ENCODE measurements at regions of chr7 and their contacts with region 1.

Region 1: DNA sequence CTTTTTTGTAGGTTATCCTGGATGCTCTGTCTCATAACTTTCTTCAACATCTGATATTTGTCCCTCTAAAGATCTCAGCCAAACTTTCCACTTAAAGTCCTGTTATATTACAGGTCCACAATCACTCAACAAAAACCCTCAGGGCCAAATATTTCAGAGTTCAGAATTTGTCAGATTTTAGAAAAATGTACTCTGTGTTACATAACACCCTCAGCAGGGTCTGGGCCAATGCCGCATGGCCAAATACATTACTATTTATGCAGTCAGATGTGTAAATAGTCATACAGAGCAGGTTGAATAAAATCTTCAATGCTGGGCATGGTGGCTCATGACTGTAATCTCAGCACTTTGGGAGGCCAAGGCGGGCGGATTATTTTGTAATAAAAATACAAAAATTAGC is 11.5 kb downstream of the RAB19 start:
- DNase-seq: no peak
- ATAC-seq: no peak
- H3K4me3 ChIP-seq: no peak overlapping the region
- H3K27ac ChIP-seq: no peak overlapping the region
- H3K4me1 ChIP-seq: no peaks in the 10 kb centered on the region
- H3K27me3 ChIP-seq: no peaks in the 10 kb centered on the region
- CTCF ChIP-seq: no peak

Region 2: DNA sequence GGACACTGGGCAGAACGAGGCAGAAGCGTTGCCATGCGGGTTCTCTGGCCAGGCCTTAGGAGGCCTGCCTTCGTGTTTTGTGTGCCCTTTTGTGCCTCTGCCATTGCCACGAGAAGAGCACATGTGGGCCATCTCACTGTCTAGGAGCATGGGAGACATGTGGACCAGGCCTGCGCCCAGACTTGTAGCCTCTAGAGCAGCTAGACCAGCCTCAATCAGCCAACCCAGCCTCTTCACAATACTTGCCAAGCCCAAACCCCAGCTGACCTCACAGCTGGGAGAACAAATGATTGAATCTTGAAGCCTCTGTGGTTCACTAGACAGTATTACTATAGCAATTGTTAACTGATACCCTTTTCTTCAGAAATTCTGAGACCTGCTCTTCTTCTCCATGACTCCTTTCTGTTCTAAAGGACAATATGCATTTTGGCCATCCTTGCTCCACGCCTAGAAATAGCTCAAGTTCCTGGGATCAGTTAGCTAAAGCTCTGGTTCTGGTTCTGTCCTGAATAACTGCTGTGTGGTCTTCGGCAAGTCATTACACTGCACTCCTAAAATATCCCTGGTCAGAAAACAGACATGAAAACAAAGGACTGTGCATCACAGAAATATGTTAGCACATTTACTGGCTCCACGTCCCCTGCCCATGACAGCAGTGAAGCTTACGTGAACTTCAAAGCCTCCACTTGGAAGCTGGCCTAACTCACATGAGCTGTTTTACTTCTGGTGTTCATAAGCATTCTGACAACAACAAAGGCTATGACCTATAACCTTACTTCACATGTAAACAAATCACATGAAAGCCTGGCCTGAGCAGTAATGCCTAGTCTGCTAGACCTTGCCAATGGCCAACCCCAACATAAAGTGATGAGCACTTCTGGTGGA is 136.2 kb after region 1 on chr7:
- CTCF ChIA-PET with region 1: no interaction called
- POLR2A ChIA-PET with region 1: interaction called, 10 read pairs
- in situ Hi-C with region 1: no loop called
- intact Hi-C with region 1: no loop called
- DNase-seq: no peak
- ATAC-seq: no peak
- H3K4me3 ChIP-seq: no peak overlapping the region
- H3K27ac ChIP-seq: no peak overlapping the region
- H3K4me1 ChIP-seq: no peaks in the 10 kb centered on the region
- H3K27me3 ChIP-seq: no peaks in the 10 kb centered on the region
- CTCF ChIP-seq: no peak